ENCODE measurements at regions of chr2 and their contacts with region 1.

Region 1: DNA sequence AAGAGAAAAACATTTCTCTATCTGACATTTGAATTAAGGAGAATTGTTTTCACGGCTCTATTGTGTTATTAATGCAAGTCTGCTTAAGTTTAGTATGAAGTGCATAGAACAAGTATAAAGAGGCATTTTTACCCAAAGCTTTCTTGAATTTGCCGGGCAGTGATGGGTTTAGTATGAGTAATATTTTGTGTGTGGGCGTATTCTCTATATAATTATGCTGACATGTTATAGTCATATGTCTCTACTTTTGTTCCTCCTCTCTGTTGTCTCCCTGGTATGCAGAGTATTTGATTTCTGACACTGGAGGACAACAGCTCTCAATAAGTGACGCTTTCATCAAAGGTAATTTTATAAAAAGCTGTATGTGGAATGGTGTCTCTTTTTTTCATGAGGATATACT is 45.9 kb downstream of the PIKFYVE start:
- DNase-seq: no peak
- H3K4me3 Mint-ChIP-seq: no peak overlapping the region
- H3K27ac Mint-ChIP-seq: no peak overlapping the region
- H3K4me1 Mint-ChIP-seq: peaks cover 21% of the 10 kb centered on the region
- H3K27me3 Mint-ChIP-seq: no peaks in the 10 kb centered on the region

Region 2: DNA sequence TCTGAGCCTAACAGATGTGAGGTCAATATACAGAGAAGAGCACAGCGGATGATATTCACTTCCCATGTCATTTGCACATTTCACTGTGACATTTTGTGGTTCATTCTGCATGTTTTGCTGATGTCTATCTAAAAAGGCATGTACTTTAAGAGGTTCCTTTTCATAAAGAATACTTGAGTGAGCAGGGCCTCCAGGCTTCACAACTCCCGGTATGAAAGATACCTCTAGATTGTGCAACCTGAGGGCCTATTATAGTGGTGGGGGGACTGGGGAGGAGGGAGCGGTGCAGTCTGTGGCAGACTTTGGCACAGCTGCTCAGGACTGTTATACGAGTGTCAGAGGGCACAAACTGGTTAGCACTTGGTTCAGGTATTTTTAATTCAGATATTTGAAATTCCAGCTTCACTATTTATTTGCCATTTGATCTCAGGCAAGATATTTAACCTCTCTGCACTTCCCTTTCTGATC is 1317.9 kb before region 1 on chr2:
- intact Hi-C with region 1: no loop called
- DNase-seq: no peak
- H3K4me3 Mint-ChIP-seq: no peak overlapping the region
- H3K27ac Mint-ChIP-seq: no peak overlapping the region
- H3K4me1 Mint-ChIP-seq: peaks cover 4% of the 10 kb centered on the region
- H3K27me3 Mint-ChIP-seq: peaks cover 17% of the 10 kb centered on the region

Region 3: DNA sequence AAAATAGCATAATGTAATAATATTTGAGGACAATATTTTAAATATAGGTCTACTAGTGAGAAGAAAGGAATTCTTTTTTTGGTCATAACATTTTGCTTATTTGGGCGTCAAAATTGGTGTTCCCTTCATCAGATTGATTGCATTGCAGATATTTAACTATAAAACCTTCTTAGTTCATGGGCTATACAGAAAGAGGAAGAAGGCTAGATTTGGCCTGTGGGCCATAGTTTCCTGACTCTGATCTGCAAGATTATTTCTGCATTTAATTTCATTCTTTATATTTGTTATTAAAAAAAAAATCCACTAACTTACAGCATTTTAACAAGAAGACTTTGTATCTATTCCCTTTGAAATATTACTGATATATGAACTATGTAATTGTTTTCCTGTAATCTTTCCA is 14.0 kb before region 1 on chr2:
- intact Hi-C with region 1: loop called (anchors 2 kb)
- DNase-seq: no peak
- H3K4me3 Mint-ChIP-seq: no peak overlapping the region
- H3K27ac Mint-ChIP-seq: no peak overlapping the region
- H3K4me1 Mint-ChIP-seq: peaks cover 22% of the 10 kb centered on the region
- H3K27me3 Mint-ChIP-seq: no peaks in the 10 kb centered on the region